ENCODE measurements at regions of chr15 and their contacts with region 1.

Region 1: DNA sequence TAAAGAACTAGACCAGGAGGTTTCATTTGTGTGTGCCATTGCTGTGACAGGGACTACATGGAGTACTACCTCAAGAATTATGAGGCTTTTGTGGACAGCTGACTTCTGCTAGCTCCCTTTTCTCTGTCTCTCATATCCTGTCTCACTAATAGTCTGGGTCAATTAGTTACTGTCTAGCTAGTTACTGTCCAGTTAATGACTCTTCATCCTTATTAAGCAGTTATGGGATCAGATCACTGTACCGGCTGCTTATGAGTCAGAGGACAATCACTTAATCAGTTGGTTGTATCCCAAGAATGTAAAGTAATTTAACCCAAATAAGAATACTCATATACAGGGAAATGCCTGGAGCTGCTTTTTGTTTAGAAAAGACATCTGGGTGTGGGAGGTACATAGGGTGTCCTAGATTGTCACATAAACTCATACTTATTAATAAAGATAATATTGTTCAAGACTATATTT is 158.0 kb downstream of the CDIN1 start:
- DNase-seq: peak; percentile 30
- H3K4me3 ChIP-seq: no peak overlapping the region
- H3K27me3 ChIP-seq: no peaks in the 10 kb centered on the region
- CTCF ChIP-seq: no peak

Region 2: DNA sequence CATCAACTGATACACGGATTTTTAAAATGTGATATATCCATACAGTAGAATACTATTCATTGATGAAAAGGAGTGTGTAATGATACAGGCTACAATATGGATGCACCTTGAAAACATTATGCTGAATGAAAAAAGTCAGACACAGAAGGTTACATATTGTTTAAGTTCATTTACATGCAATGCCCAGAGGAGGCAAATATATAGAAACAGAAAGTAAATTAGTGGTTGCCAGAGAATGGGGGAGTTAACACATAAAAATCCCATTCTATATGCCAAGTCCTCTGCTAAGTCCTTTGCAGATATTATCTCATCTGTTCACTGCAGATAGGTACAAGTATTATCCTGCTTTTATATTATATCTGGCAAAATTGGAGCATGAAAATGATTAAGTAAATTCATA is 180.1 kb before region 1 on chr15:
- CTCF ChIA-PET with region 1: no interaction called
- POLR2A ChIA-PET with region 1: no interaction called
- DNase-seq: no peak
- H3K4me3 ChIP-seq: no peak overlapping the region
- H3K27me3 ChIP-seq: no peaks in the 10 kb centered on the region
- CTCF ChIP-seq: no peak

Region 3: GRCh38 chr15:36798366-36798765 is 60.9 kb after region 1 on chr15:
- CTCF ChIA-PET with region 1: no interaction called
- POLR2A ChIA-PET with region 1: interaction called, 15 read pairs
- DNase-seq: peak; percentile 50
- H3K4me3 ChIP-seq: no peak overlapping the region
- H3K27me3 ChIP-seq: no peaks in the 10 kb centered on the region
- CTCF ChIP-seq: no peak

Region 4: GRCh38 chr15:37100109-37100965 is 362.9 kb after region 1 on chr15 and contains the start of gene MEIS2:
- CTCF ChIA-PET with region 1: no interaction called
- POLR2A ChIA-PET with region 1: no interaction called
- DNase-seq: peak; percentile 64
- H3K4me3 ChIP-seq: peak within 1 kb of the TSS; percentile 79
- H3K27me3 ChIP-seq: no peaks in the 10 kb centered on the region
- CTCF ChIP-seq: no peak
- polyA plus RNA-seq, gene MEIS2: 44.4 and 54.1 TPM in 2 replicates

Measured in BJ (cell line).